Natural killer cell (primary cell): ENCODE measurements at regions of chr13 and their contacts with region 1.

Region 1: DNA sequence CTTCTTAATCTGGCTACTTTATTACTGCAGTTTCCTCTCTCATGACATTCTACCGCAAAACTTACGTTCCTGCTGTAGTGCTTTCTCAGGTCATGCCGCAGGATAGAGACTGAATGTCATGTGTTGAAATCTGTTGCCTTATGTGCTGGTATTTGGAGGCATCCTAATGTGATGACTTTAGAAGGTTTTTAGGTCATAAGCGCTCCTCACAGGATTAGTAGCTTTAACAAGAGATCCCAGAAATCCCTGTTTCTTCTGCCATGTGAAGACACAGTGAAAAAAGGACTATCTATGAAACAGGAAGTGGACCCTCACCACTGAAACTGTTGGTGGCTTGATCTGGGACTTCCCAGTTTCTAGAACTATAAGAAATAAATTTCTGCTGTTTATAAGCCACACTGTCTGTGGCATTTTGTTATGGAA is 209.3 kb downstream of the LACC1 start:
- DNase-seq: peak in 1 of 2 donors; percentile 50
- ATAC-seq: peak; percentile 75 to 81 (median 77)
- H3K4me3 ChIP-seq: no peak overlapping the region
- H3K4me3 Mint-ChIP-seq: peak overlapping the region; percentile 32
- H3K27ac ChIP-seq: no peak overlapping the region
- H3K27ac Mint-ChIP-seq: peak overlapping the region; percentile 29 to 63
- H3K4me1 ChIP-seq: peaks cover 15% of the 10 kb centered on the region
- H3K4me1 Mint-ChIP-seq: peaks cover 36% of the 10 kb centered on the region in 2 donors
- H3K27me3 ChIP-seq: no peaks in the 10 kb centered on the region
- H3K27me3 Mint-ChIP-seq: peaks cover 6 to 14% of the 10 kb centered on the region in 2 donors
- CTCF ChIP-seq: no peak

Region 2: GRCh38 chr13:44040070-44040817 is 48.8 kb before region 1 on chr13:
- intact Hi-C with region 1: no loop called
- DNase-seq: no peak
- ATAC-seq: no peak
- H3K4me3 ChIP-seq: no peak overlapping the region
- H3K4me3 Mint-ChIP-seq: no peak overlapping the region
- H3K27ac ChIP-seq: no peak overlapping the region
- H3K27ac Mint-ChIP-seq: no peak overlapping the region
- H3K4me1 ChIP-seq: no peaks in the 10 kb centered on the region
- H3K4me1 Mint-ChIP-seq: no peaks in the 10 kb centered on the region
- H3K27me3 ChIP-seq: no peaks in the 10 kb centered on the region
- H3K27me3 Mint-ChIP-seq: peaks cover 18 to 22% of the 10 kb centered on the region in 2 donors
- CTCF ChIP-seq: no peak

Region 3: GRCh38 chr13:44112700-44113329 is 23.8 kb after region 1 on chr13:
- intact Hi-C with region 1: loop called (anchors 2 kb)
- DNase-seq: peak; percentile 19 to 62
- ATAC-seq: peak; percentile 81 to 85 (median 83)
- H3K4me3 ChIP-seq: no peak overlapping the region
- H3K4me3 Mint-ChIP-seq: peak overlapping the region; percentile 74
- H3K27ac ChIP-seq: peak overlapping the region; percentile 92
- H3K27ac Mint-ChIP-seq: peak overlapping the region; percentile 90 to 93
- H3K4me1 ChIP-seq: peaks cover 29% of the 10 kb centered on the region
- H3K4me1 Mint-ChIP-seq: peaks cover 45 to 48% of the 10 kb centered on the region in 2 donors
- H3K27me3 ChIP-seq: no peaks in the 10 kb centered on the region
- H3K27me3 Mint-ChIP-seq: no peaks in the 10 kb centered on the region
- CTCF ChIP-seq: no peak

Region 4: DNA sequence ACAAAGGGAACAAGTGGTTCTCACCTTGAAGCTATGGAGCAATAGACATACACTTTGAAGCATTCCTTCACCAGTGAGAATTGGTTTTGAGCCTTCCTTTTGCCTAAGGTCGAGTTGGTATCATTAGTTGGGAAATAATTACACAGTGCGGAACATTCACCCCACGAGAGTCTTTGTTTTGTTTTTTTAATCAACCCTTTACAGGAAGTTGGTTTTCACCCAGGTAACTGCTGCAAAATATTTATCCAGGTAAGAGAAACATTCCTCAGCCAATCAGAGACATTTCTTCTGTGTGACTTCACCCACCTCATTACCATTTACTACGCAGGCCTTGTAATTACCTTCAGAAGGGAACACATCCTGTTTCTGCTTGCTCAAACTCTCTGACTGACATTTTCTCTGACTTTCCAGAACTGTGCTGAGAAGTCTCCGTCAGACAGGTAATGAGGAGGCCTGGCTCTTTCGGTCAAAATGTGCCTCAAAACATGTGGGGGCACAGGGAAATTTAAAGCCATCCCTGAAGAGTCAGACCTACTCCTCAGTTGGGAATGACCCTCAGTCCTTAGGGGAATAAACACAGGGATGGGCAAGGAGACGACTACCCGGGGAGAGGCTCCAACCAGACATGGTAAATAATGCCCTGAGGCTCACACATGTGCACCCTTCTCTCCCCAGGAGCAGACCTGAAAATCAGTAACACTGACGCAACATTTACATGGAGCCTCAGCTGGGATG is 261.9 kb after region 1 on chr13:
- intact Hi-C with region 1: loop called (anchors 10 kb)
- DNase-seq: peak in 1 of 2 donors; percentile 9
- ATAC-seq: no peak
- H3K4me3 ChIP-seq: no peak overlapping the region
- H3K4me3 Mint-ChIP-seq: no peak overlapping the region
- H3K27ac ChIP-seq: no peak overlapping the region
- H3K27ac Mint-ChIP-seq: peak overlapping the region in 1 of 2 donors; percentile 84
- H3K4me1 ChIP-seq: peaks cover 25% of the 10 kb centered on the region
- H3K4me1 Mint-ChIP-seq: peaks cover 27 to 30% of the 10 kb centered on the region in 2 donors
- H3K27me3 ChIP-seq: no peaks in the 10 kb centered on the region
- H3K27me3 Mint-ChIP-seq: peaks cover 0 to 4% of the 10 kb centered on the region in 2 donors
- CTCF ChIP-seq: no peak